Sigmoid colon (tissue), 7 donors: ENCODE measurements at regions of chr3 and their contacts with region 1.

Region 1: GRCh38 chr3:184777336-184778004 is 34.5 kb upstream of the VPS8 start:
- DNase-seq: peak; percentile 96
- H3K4me3 ChIP-seq: no peak overlapping the region
- H3K27ac ChIP-seq: no peak overlapping the region
- H3K4me1 ChIP-seq: peaks cover 0 to 5% (median 0%) of the 10 kb centered on the region in 4 donors
- H3K27me3 ChIP-seq: peaks cover 0 to 14% (median 5%) of the 10 kb centered on the region in 3 donors
- CTCF ChIP-seq: peak; percentile 83 to 97 (median 90)
- EP300 ChIP-seq: no peak
- POLR2A ChIP-seq: no peak

Region 2: GRCh38 chr3:184362668-184363540 is 414.6 kb before region 1 on chr3:
- intact Hi-C with region 1: loop called (anchors 10 kb)
- DNase-seq: peak; percentile 98
- H3K4me3 ChIP-seq: peak overlapping the region; percentile 63 to 94 (median 86)
- H3K27ac ChIP-seq: peak overlapping the region; percentile 93 to 99 (median 98)
- H3K4me1 ChIP-seq: peaks cover 0 to 37% (median 34%) of the 10 kb centered on the region in 4 donors
- H3K27me3 ChIP-seq: no peaks in the 10 kb centered on the region
- CTCF ChIP-seq: peak; percentile 33 to 50 (median 44)
- EP300 ChIP-seq: no peak
- POLR2A ChIP-seq: peak; percentile 46 to 69

Region 3: DNA sequence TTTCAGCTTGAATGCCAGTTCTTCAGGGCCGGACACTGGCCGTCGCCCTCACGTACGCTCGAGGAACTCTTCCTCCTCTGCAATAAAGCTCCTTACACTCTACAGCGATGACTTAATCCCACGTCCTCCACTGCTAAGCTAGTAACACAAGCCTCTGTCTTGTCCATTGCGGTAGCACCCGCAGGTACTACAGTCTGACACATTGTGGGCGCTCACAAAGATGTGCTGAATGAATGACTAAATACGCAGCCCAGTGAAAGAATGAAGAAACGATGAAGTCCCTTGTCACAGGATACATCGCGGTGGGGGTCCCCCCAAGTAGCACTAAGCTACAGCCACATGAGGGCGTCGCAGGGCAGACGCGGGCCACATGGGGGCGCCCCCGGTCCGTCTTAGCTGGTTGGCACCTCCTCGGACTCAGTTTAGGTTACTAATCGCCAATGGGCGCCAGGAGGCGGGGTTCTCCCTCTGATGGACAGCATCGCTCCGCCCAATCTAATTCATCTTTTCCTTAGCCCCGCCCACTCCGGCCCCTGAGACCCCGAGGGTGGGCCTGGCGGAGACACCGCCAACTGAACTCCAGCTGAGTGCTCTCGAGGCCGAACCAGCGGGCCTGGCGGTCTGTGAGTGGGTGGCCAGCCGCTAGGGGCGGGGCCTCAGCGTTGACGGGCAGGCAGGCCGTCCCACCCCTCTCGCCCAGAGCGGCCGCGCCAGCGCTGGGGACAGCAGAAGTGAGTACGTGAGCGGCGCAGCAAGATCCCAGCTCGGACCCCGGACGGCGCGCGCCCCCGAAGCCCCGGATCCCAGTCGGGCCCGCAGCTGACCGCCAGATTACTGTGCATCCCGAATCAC is 216.2 kb before region 1 on chr3 and contains the start of gene EPHB3:
- intact Hi-C with region 1: loop called (anchors 1 kb)
- DNase-seq: peak; percentile 100
- H3K4me3 ChIP-seq: peak within 1 kb of the TSS; percentile 64 to 91 (median 72)
- H3K27ac ChIP-seq: peak within 1 kb of the TSS; percentile 80 to 89 (median 81)
- H3K4me1 ChIP-seq: peaks cover 0 to 53% (median 35%) of the 10 kb centered on the region in 4 donors
- H3K27me3 ChIP-seq: no peaks in the 10 kb centered on the region
- CTCF ChIP-seq: peak; percentile 98 to 99 (median 98)
- EP300 ChIP-seq: no peak
- POLR2A ChIP-seq: peak; percentile 74 to 89
- total RNA-seq, gene EPHB3: 1.8 to 2.8 (median 2.2) TPM

Region 4: GRCh38 chr3:184727357-184728009 is 50.0 kb before region 1 on chr3:
- intact Hi-C with region 1: loop called (anchors 5 kb)
- DNase-seq: peak; percentile 78
- H3K4me3 ChIP-seq: no peak overlapping the region
- H3K27ac ChIP-seq: peak overlapping the region in 1 of 4 donors; percentile 37
- H3K4me1 ChIP-seq: peaks cover 0 to 8% (median 4%) of the 10 kb centered on the region in 4 donors
- H3K27me3 ChIP-seq: no peaks in the 10 kb centered on the region
- CTCF ChIP-seq: peak; percentile 42 to 75 (median 57)
- EP300 ChIP-seq: no peak
- POLR2A ChIP-seq: no peak

Region 5: GRCh38 chr3:184757022-184757651 is 20.3 kb before region 1 on chr3:
- intact Hi-C with region 1: loop called (anchors 2 kb)
- DNase-seq: peak; percentile 91
- H3K4me3 ChIP-seq: peak overlapping the region in 3 of 4 donors; percentile 5 to 20 (median 20)
- H3K27ac ChIP-seq: peak overlapping the region; percentile 43 to 78 (median 74)
- H3K4me1 ChIP-seq: peaks cover 0 to 26% (median 20%) of the 10 kb centered on the region in 4 donors
- H3K27me3 ChIP-seq: no peaks in the 10 kb centered on the region
- CTCF ChIP-seq: peak in 1 of 4 experiments; percentile 11
- EP300 ChIP-seq: peak in 2 of 4 donors; percentile 36 to 85
- POLR2A ChIP-seq: no peak

Region 6: DNA sequence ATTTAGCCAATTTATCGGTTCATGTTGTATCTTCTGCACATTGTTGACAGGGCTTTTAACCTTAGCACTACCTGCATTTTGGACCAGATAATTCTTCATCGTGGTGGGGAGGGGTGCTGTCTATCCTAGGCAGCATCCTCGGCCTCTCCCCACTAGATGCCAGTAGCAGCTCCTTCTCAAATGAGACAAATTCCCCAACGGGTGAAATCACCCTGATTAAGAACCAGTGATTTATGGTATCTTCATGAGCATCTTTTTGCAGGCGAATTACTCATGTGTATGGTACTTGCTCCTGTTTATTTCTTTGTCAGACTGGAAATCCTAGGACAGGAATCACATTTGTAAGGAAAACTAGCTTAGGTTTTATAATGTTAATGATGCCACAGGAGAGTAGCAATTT is 307.4 kb after region 1 on chr3:
- intact Hi-C with region 1: no loop called
- DNase-seq: no peak
- H3K4me3 ChIP-seq: no peak overlapping the region
- H3K27ac ChIP-seq: peak overlapping the region in 2 of 4 donors; percentile 32 to 44
- H3K4me1 ChIP-seq: peaks cover 0 to 53% (median 28%) of the 10 kb centered on the region in 4 donors
- H3K27me3 ChIP-seq: no peaks in the 10 kb centered on the region
- CTCF ChIP-seq: peak in 2 of 4 experiments; percentile 17 to 19
- EP300 ChIP-seq: no peak
- POLR2A ChIP-seq: no peak